CD4-positive, alpha-beta T cell (primary cell): ENCODE measurements at regions of chr9 and their contacts with region 1.

Region 1: GRCh38 chr9:84315278-84315877 is 25.2 kb downstream of the SLC28A3 start:
- DNase-seq: peak; percentile 13 to 73 (median 40)
- ATAC-seq: peak; percentile 46
- H3K4me3 ChIP-seq: no peak overlapping the region
- H3K4me3 Mint-ChIP-seq: no peak overlapping the region
- H3K27ac ChIP-seq: no peak overlapping the region
- H3K27ac Mint-ChIP-seq: no peak overlapping the region
- H3K4me1 ChIP-seq: no peaks in the 10 kb centered on the region
- H3K4me1 Mint-ChIP-seq: no peaks in the 10 kb centered on the region
- H3K27me3 ChIP-seq: no peaks in the 10 kb centered on the region
- H3K27me3 Mint-ChIP-seq: no peaks in the 10 kb centered on the region
- CTCF ChIP-seq: peak; percentile 78

Region 2: DNA sequence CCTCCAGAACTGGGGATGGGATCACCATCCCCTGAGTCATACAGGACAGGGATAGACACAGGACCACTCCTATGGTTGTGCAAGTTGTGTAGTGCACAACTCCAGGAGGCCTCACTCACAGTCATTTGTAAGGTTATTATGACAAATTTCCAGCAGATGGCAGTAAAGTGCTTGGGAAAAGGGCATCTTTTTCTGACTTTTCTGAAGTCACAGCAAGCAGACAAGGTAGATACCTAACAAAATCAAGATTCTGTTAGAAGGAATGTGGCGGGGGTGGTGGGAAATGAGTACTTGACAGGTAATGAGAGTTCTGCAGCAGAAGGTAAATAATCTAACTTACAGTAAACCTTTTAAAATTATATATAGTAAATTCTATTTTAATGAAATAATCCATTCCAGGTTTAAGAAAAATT is 377.5 kb before region 1 on chr9:
- CTCF ChIA-PET with region 1: interaction called, 10 read pairs
- POLR2A ChIA-PET with region 1: no interaction called
- intact Hi-C with region 1: loop called (anchors 1 kb)
- DNase-seq: peak in 6 of 14 experiments; percentile 9 to 81 (median 56)
- ATAC-seq: peak; percentile 60
- H3K4me3 ChIP-seq: no peak overlapping the region
- H3K4me3 Mint-ChIP-seq: no peak overlapping the region
- H3K27ac ChIP-seq: no peak overlapping the region
- H3K27ac Mint-ChIP-seq: no peak overlapping the region
- H3K4me1 ChIP-seq: no peaks in the 10 kb centered on the region
- H3K4me1 Mint-ChIP-seq: no peaks in the 10 kb centered on the region
- H3K27me3 ChIP-seq: no peaks in the 10 kb centered on the region
- H3K27me3 Mint-ChIP-seq: no peaks in the 10 kb centered on the region
- CTCF ChIP-seq: peak; percentile 83

Region 3: GRCh38 chr9:84170521-84171141 is 144.7 kb before region 1 on chr9:
- CTCF ChIA-PET with region 1: no interaction called
- POLR2A ChIA-PET with region 1: no interaction called
- intact Hi-C with region 1: loop called in 1 of 2 experiments (anchors 5 kb)
- DNase-seq: no peak
- ATAC-seq: no peak
- H3K4me3 ChIP-seq: no peak overlapping the region
- H3K4me3 Mint-ChIP-seq: no peak overlapping the region
- H3K27ac ChIP-seq: no peak overlapping the region
- H3K27ac Mint-ChIP-seq: no peak overlapping the region
- H3K4me1 ChIP-seq: no peaks in the 10 kb centered on the region
- H3K4me1 Mint-ChIP-seq: no peaks in the 10 kb centered on the region
- H3K27me3 ChIP-seq: no peaks in the 10 kb centered on the region
- H3K27me3 Mint-ChIP-seq: no peaks in the 10 kb centered on the region
- CTCF ChIP-seq: no peak

Region 4: DNA sequence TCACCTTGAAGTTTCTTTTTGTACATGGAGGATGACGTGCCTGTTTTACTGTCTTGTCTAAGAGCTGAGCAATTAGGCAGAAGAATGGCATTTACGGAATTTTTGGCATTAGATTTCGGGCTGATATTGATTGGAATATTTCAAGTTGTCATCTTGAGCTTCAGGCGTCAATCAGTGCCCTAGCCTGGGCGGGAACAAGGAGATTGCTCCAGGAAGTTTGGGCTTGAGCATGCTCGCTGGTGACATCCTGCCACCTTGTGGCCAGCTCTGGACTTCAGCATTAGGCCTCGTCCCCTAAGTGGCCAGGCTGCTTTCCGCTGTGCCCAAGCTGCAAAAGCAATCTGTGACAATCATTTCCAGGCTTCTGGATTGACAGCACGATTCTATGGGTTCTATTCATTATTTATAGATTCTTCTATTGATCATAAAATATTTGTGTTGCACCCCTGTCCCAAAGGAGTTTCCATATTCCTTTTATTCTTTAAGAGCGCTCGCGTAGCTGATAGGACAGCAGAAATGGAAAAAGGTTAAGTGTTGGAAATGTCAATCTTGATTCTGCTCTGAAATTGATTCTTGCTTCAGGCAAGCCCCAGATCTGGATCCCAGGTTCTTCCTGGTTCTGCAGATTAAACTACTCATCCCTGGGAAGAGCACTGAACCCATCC is 54.2 kb before region 1 on chr9:
- CTCF ChIA-PET with region 1: no interaction called
- POLR2A ChIA-PET with region 1: no interaction called
- intact Hi-C with region 1: loop called in 1 of 2 experiments (anchors 2 kb)
- DNase-seq: peak; percentile 11 to 73 (median 36)
- ATAC-seq: no peak
- H3K4me3 ChIP-seq: no peak overlapping the region
- H3K4me3 Mint-ChIP-seq: no peak overlapping the region
- H3K27ac ChIP-seq: no peak overlapping the region
- H3K27ac Mint-ChIP-seq: no peak overlapping the region
- H3K4me1 ChIP-seq: peaks cover 3% of the 10 kb centered on the region
- H3K4me1 Mint-ChIP-seq: no peaks in the 10 kb centered on the region
- H3K27me3 ChIP-seq: peaks cover 0 to 5% of the 10 kb centered on the region in 2 experiments
- H3K27me3 Mint-ChIP-seq: peaks cover 20% of the 10 kb centered on the region
- CTCF ChIP-seq: peak; percentile 77